ENCODE measurements at regions of chr6 and their contacts with region 1.

Region 1: DNA sequence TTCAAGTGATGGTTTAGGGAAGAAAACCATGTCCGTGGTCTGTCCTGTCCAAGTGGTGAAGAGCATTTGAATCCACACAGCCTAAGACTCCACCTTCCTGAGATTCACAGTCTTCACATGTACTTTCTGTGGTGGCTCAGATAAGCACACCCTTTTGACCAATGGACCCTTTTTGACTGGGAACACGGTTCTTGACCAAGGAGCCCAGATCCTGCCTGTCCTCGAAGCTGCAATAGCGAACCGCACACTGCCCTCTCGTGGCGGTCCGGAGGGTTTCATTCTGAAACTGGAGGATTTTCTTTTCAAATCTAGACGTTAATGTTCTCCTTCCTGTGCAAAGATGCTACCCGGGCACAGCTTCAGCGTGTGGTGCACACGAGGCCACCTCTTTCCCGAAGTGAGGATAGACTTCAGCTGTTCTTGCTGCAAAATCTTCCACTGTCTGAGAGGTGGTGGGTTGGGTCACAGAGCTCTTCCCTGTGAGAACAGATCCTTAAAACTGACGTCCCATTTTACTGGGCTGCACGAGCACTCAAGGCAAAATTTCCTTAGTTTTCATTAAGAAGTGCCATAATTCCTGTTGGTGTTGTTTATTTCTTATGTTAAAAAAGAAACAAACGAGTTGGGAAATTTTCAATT is 90.5 kb downstream of the SYNJ2 start:
- DNase-seq: peak; percentile 79
- ATAC-seq: peak; percentile 60 to 70
- H3K4me3 ChIP-seq: no peak overlapping the region
- H3K27ac ChIP-seq: no peak overlapping the region
- H3K4me1 ChIP-seq: peaks cover 14% of the 10 kb centered on the region
- H3K27me3 ChIP-seq: no peaks in the 10 kb centered on the region
- CTCF ChIP-seq: peak; percentile 79

Region 2: DNA sequence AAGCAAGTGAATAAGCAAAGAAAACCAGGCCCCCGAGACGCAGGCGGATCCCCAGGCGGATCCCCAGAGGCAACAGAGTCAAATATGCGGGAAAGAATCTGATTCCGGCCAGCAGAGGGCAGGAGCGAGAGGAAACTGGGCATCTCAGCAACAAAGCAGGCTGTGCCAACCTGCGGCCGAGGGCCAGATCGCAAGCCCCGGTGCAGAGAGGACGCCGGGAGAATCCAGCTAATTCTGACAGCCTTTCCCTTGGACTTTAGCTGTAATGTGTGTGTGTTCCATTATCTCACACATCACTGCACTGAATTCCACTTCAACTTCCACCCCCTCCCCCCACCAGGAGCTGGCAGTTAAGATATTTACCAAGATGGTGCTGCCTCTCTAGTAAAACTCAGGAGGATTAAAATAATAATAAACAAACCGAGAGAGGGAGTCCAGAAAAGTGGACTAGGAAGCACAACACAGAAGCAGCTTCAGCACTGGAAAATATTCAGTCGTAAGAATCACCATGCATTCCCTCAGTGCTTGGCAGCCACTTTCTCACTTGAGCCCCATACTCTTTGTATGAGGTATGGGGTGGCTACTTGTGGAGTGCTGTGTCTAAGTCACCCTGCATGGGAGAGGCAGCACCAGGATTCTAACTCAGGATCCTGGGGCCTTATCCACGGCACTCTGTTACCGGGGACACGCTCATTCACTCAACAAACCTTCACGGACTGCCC is 315.3 kb before region 1 on chr6:
- intact Hi-C with region 1: loop called (anchors 10 kb)
- DNase-seq: peak; percentile 85
- ATAC-seq: peak; percentile 91 to 94
- H3K4me3 ChIP-seq: no peak overlapping the region
- H3K27ac ChIP-seq: no peak overlapping the region
- H3K4me1 ChIP-seq: peaks cover 13% of the 10 kb centered on the region
- H3K27me3 ChIP-seq: no peaks in the 10 kb centered on the region
- CTCF ChIP-seq: peak; percentile 85

Region 3: DNA sequence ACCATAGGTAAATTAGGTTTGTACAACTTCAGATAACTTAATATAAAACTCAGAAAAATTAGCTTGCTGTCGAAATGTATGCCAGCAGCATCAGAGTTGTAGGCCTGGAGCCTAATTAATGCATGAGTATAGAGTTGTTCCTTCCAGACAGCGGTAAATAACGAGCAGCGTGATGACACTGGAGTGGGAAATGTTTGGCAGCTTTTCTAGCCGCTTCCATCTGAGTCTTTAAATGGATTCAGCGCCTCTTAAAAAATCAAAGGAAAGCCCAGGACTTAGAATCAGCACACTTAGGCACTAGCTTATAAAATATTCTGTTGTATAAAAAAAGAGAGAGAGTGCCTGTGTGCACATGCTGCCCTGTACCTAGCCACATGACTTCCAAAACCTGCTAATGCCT is 134.3 kb before region 1 on chr6:
- intact Hi-C with region 1: no loop called
- DNase-seq: no peak
- ATAC-seq: no peak
- H3K4me3 ChIP-seq: no peak overlapping the region
- H3K27ac ChIP-seq: no peak overlapping the region
- H3K4me1 ChIP-seq: no peaks in the 10 kb centered on the region
- H3K27me3 ChIP-seq: no peaks in the 10 kb centered on the region
- CTCF ChIP-seq: no peak

Region 4: GRCh38 chr6:158290659-158291058 is 218.5 kb after region 1 on chr6:
- intact Hi-C with region 1: no loop called
- DNase-seq: no peak
- ATAC-seq: peak; percentile 67 to 81
- H3K4me3 ChIP-seq: no peak overlapping the region
- H3K27ac ChIP-seq: no peak overlapping the region
- H3K4me1 ChIP-seq: peaks cover 10% of the 10 kb centered on the region
- H3K27me3 ChIP-seq: no peaks in the 10 kb centered on the region
- CTCF ChIP-seq: no peak

Region 5: DNA sequence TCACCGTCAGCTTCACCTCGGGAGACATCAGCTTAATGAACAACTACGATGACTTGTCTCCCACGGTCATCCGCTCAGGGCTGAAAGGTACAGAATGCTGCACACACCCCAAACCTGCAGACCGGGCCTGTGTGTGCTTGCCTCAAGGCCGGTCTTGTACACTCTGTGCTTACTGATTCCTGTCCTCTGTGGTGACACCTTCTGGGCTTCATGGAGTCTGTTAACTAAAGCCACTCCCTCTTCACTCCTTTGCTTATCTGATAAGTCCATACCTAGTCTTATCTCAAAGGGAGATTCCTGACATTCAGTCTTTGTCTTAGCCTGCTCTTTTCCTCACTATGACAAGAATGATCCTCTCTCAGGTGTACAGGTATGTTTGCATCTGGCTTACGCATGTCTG is 380.0 kb after region 1 on chr6:
- intact Hi-C with region 1: no loop called
- DNase-seq: no peak
- ATAC-seq: no peak
- H3K4me3 ChIP-seq: no peak overlapping the region
- H3K27ac ChIP-seq: no peak overlapping the region
- H3K4me1 ChIP-seq: no peaks in the 10 kb centered on the region
- H3K27me3 ChIP-seq: no peaks in the 10 kb centered on the region
- CTCF ChIP-seq: no peak